Activated CD4-positive, alpha-beta memory T cell treated with anti-CD3 and anti-CD28 coated beads for 36 hours (primary cell): ENCODE measurements at regions of chr7 and their contacts with region 1.

Region 1: GRCh38 chr7:90412458-90413184 is 9.4 kb downstream of the CLDN12 start:
- DNase-seq: peak; percentile 44
- H3K4me3 Mint-ChIP-seq: no peak overlapping the region
- H3K27ac Mint-ChIP-seq: no peak overlapping the region
- H3K4me1 Mint-ChIP-seq: no peaks in the 10 kb centered on the region
- H3K27me3 Mint-ChIP-seq: no peaks in the 10 kb centered on the region

Region 2: GRCh38 chr7:90312745-90313144 is 99.9 kb before region 1 on chr7:
- CTCF ChIA-PET with region 1: interaction called, 7 read pairs
- POLR2A ChIA-PET with region 1: no interaction called
- intact Hi-C with region 1: loop called (anchors 5 kb)
- DNase-seq: no peak
- H3K4me3 Mint-ChIP-seq: no peak overlapping the region
- H3K27ac Mint-ChIP-seq: no peak overlapping the region
- H3K4me1 Mint-ChIP-seq: no peaks in the 10 kb centered on the region
- H3K27me3 Mint-ChIP-seq: peaks cover 7% of the 10 kb centered on the region

Region 3: GRCh38 chr7:90655566-90655965 is 242.9 kb after region 1 on chr7:
- CTCF ChIA-PET with region 1: no interaction called
- POLR2A ChIA-PET with region 1: no interaction called
- intact Hi-C with region 1: no loop called
- DNase-seq: no peak
- H3K4me3 Mint-ChIP-seq: no peak overlapping the region
- H3K27ac Mint-ChIP-seq: no peak overlapping the region
- H3K4me1 Mint-ChIP-seq: no peaks in the 10 kb centered on the region
- H3K27me3 Mint-ChIP-seq: no peaks in the 10 kb centered on the region